H1 (cell line): ENCODE measurements at regions of chr2 and their contacts with region 1.

Region 1: GRCh38 chr2:167857416-167857815 is 390.0 kb downstream of the STK39 start:
- DNase-seq: no peak
- H3K4me3 ChIP-seq: no peak overlapping the region
- H3K27ac ChIP-seq: no peak overlapping the region
- H3K4me1 ChIP-seq: peaks cover 0 to 18% (median 3%) of the 10 kb centered on the region in 4 experiments; a peak in 5 of 7 replicates
- H3K27me3 ChIP-seq: no peaks in the 10 kb centered on the region
- CTCF ChIP-seq: no peak
- EP300 ChIP-seq: no peak
- POLR2A ChIP-seq: no peak
- RAD21 ChIP-seq: no peak

Region 2: GRCh38 chr2:167626301-167626700 is 231.1 kb before region 1 on chr2:
- CTCF ChIA-PET with region 1: no interaction called
- POLR2A ChIA-PET with region 1: no interaction called
- DNase-seq: no peak
- H3K4me3 ChIP-seq: no peak overlapping the region
- H3K27ac ChIP-seq: no peak overlapping the region
- H3K4me1 ChIP-seq: no peaks in the 10 kb centered on the region
- H3K27me3 ChIP-seq: no peaks in the 10 kb centered on the region
- CTCF ChIP-seq: no peak
- EP300 ChIP-seq: no peak
- POLR2A ChIP-seq: no peak
- RAD21 ChIP-seq: no peak

Region 3: GRCh38 chr2:167844714-167845530 is 12.5 kb before region 1 on chr2:
- CTCF ChIA-PET with region 1: interaction called, 15 read pairs
- POLR2A ChIA-PET with region 1: interaction called, 5 read pairs
- DNase-seq: peak; percentile 47 to 75
- H3K4me3 ChIP-seq: no peak overlapping the region
- H3K27ac ChIP-seq: no peak overlapping the region
- H3K4me1 ChIP-seq: no peaks in the 10 kb centered on the region; a peak in 2 of 7 replicates
- H3K27me3 ChIP-seq: no peaks in the 10 kb centered on the region
- CTCF ChIP-seq: peak; percentile 26 to 42 (median 41)
- EP300 ChIP-seq: no peak
- POLR2A ChIP-seq: no peak
- RAD21 ChIP-seq: peak; percentile 35 to 51; a peak in 3 of 4 replicates

Region 4: DNA sequence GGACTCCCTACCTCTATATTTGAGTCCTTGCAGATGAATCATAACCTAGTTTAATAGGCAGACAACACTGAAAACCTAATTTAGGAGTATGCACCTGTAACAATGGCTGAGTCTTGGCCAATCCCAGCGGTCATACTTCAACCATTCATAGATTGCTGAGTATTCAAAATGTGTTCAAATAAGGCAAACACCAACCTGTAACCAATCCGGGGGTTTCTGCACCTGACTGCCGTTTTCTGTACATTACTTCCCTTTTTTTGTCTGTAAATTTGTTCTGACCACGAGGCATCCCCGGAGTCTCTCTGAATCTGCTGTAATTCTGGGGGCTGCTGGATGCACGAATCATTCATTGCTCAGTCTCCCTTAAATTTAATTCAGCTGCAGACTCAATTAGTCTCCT is 51.4 kb after region 1 on chr2:
- CTCF ChIA-PET with region 1: no interaction called
- POLR2A ChIA-PET with region 1: no interaction called
- DNase-seq: no peak
- H3K4me3 ChIP-seq: no peak overlapping the region
- H3K27ac ChIP-seq: no peak overlapping the region
- H3K4me1 ChIP-seq: no peaks in the 10 kb centered on the region
- H3K27me3 ChIP-seq: no peaks in the 10 kb centered on the region
- CTCF ChIP-seq: no peak
- EP300 ChIP-seq: no peak
- POLR2A ChIP-seq: no peak
- RAD21 ChIP-seq: no peak